ENCODE measurements at regions of chr1 and their contacts with region 1.

Region 1: DNA sequence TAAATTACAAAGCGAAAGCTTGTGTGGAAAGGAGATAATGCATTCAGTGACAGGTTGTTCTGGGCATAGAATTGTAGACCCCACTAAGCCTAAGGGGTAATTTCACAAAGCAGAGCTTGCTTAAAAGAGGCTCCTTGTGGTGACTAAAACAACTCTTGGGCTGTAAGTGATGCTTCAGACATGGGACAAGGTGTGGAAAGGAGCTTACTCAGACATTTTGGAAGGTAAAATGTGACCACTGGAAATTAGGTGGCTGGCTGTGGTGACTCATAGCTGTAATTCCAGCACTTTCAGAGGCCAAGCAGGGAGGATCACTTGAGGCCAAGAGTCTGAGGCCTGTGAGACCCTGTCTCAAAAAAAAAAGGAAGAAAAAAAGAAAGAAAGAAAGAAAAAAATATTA is 51.1 kb upstream of the LRRC8C start:
- DNase-seq: no peak
- H3K4me3 Mint-ChIP-seq: no peak overlapping the region
- H3K27ac Mint-ChIP-seq: peak overlapping the region; percentile 91
- H3K4me1 Mint-ChIP-seq: peaks cover 53% of the 10 kb centered on the region
- H3K27me3 Mint-ChIP-seq: no peaks in the 10 kb centered on the region

Region 2: GRCh38 chr1:89566761-89567174 is 15.1 kb before region 1 on chr1:
- intact Hi-C with region 1: loop called (anchors 2 kb)
- DNase-seq: no peak
- H3K4me3 Mint-ChIP-seq: no peak overlapping the region
- H3K27ac Mint-ChIP-seq: no peak overlapping the region
- H3K4me1 Mint-ChIP-seq: peaks cover 20% of the 10 kb centered on the region
- H3K27me3 Mint-ChIP-seq: no peaks in the 10 kb centered on the region

Measured in activated T-helper 1 cell treated with anti-CD3 and anti-CD28 coated beads, Interleukin-12 subunit alpha, Interleukin-12 subunit beta, Interleukin-2, Interleukin-4 antibody, amounts not matched to agents 30 ng/mL and 10 ng/mL and 1 ng/mL, durations not matched to agents 14 hours and 24 hours and 36 hours (primary cell).